A549 (cell line): ENCODE measurements at regions of chr1 and their contacts with region 1.

Region 1: DNA sequence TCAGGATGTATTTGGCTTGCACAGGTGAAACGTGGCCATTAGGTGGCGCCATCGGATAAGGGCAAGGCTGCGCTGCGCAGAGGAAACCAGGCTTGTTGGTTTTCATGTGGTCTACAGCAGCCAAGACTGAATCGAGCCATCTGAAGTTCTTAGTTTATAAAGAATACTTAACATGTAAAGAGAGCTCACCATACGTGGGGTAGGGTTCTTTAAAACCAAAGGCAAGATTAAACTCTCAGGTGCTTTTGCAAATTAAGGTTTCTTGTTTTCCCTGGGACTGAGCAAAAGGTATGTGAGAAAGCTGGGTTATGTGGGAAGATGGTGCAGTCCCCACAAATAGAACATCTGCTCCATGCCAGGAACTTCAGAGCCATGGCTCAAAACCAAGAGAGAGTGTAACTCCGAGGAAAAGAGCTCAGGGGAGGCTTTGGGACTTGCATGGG is 9.3 kb downstream of the MASP2 start:
- DNase-seq: peak; percentile 74 to 78
- ATAC-seq: peak; percentile 90 to 95
- H3K4me3 ChIP-seq: no peak overlapping the region
- H3K27ac ChIP-seq: no peak overlapping the region
- H3K4me1 ChIP-seq: no peaks in the 10 kb centered on the region
- CTCF ChIP-seq: peak; percentile 86
- EP300 ChIP-seq: no peak
- POLR2A ChIP-seq: no peak
- RAD21 ChIP-seq: peak; percentile 90 to 96

Region 2: DNA sequence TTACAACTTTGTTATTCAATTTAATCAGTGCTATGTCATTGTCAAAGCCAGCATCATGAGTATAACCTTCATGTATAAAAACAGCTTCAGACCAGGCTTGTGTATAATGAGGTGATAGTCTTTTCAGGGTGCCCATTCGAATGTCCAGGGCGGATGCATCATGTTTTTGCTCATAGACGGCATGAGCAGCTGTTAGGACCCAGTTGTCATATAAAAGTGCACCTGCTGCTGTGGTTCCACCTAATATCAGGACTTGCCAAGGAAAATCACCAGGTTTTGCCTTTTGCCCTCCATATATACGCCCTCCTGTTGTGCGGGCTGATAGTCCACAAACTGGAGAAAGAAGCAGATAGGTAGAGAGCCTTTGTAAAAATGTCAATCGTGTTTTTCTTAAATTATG is 10.4 kb before region 1 on chr1:
- CTCF ChIA-PET with region 1: interaction called, 12 read pairs
- POLR2A ChIA-PET with region 1: no interaction called
- DNase-seq: no peak
- ATAC-seq: no peak; a peak in 1 of 6 replicates
- H3K4me3 ChIP-seq: no peak overlapping the region
- H3K27ac ChIP-seq: no peak overlapping the region
- H3K4me1 ChIP-seq: no peaks in the 10 kb centered on the region
- CTCF ChIP-seq: no peak
- EP300 ChIP-seq: no peak
- POLR2A ChIP-seq: no peak
- RAD21 ChIP-seq: no peak

Region 3: DNA sequence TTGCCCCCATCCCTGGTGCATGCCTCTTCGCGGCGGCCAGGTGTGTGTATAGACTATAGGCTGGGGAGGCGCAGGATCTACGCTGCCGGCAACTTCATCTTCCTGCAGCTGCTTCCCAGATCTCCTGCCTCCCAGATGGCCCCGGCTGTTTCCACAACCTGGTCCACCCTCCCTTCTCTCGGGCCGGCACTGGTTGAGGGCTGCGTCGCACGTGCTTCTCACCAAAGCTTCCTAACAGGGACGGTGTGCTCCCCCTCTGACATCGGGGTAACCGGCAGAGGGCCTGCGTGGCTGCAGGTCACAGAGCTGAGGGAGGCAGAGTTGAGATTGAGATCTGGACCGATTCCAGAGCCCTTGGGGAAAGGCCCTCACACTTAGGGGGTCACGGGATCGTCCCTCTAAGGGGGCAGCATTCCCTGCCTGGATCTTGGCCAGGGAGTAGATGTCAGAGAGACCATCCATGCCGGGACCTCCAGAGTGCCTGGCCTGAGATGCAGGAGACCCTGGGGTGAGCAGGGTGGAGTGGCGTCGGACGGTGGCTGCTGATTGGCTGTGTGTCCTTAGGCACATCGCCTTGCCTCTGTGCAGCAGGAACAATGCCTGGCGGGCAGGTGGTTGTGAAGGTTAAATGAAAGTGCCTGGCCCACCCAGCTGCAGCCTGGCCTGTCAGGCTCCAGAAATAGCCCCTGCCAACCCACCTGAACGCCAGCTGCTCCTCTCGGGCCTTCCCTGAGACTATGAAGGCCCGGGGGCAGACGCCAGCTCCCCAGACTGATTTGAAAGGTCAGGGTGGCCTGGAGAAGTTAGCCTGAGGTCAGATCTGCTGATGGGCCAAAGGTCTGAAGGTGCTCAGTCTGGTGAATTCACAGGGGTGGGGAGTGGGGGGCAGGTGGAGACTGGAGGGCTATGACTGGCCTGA is 15.3 kb after region 1 on chr1:
- CTCF ChIA-PET with region 1: interaction called, 59 read pairs
- POLR2A ChIA-PET with region 1: no interaction called
- DNase-seq: no peak
- ATAC-seq: peak; percentile 31 to 32
- H3K4me3 ChIP-seq: no peak overlapping the region
- H3K27ac ChIP-seq: no peak overlapping the region
- H3K4me1 ChIP-seq: no peaks in the 10 kb centered on the region; the same call in 2 of the 3 replicates
- CTCF ChIP-seq: no peak
- EP300 ChIP-seq: no peak
- POLR2A ChIP-seq: no peak
- RAD21 ChIP-seq: no peak

Region 4: GRCh38 chr1:11059990-11060830 is 22.4 kb after region 1 on chr1 and contains the start of gene SRM:
- CTCF ChIA-PET with region 1: interaction called, 33 read pairs
- POLR2A ChIA-PET with region 1: interaction called, 3 read pairs
- DNase-seq: peak; percentile 83 to 89
- ATAC-seq: peak; percentile 95 to 97
- H3K4me3 ChIP-seq: peak within 1 kb of the TSS; percentile 97
- H3K27ac ChIP-seq: peak within 1 kb of the TSS; percentile 95 to 100
- H3K4me1 ChIP-seq: peaks cover 9% of the 10 kb centered on the region; the same call in 2 of the 3 replicates
- CTCF ChIP-seq: no peak
- EP300 ChIP-seq: no peak
- POLR2A ChIP-seq: peak; percentile 82
- RAD21 ChIP-seq: no peak
- polyA plus RNA-seq, gene SRM: 30.8 and 43.6 TPM in 2 replicates

Region 5: DNA sequence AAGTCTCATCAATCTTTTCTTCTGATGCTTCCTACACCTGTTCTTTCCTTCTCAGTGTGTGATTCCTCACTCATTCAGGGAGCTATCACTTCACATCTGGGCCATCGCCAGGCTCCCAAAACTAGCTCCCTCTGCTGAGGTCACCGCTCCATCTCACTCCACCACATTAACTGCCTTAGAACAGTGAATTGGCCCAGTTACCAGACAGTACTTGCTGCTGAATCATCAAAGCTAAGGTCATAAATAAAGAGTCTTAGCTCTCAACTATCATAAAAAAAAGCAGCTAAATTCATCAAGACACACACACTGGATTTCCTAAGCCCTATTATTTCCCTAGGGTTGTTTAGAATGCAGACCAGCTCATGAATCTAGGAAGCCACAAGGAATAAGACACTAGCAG is 40.9 kb after region 1 on chr1:
- CTCF ChIA-PET with region 1: interaction called, 11 read pairs
- POLR2A ChIA-PET with region 1: no interaction called
- DNase-seq: no peak
- ATAC-seq: no peak
- H3K4me3 ChIP-seq: no peak overlapping the region
- H3K27ac ChIP-seq: no peak overlapping the region
- H3K4me1 ChIP-seq: no peaks in the 10 kb centered on the region
- CTCF ChIP-seq: no peak
- EP300 ChIP-seq: no peak
- POLR2A ChIP-seq: no peak
- RAD21 ChIP-seq: no peak

Region 6: GRCh38 chr1:11099310-11100149 is 61.8 kb after region 1 on chr1 and contains the start of gene EXOSC10:
- CTCF ChIA-PET with region 1: interaction called, 16 read pairs
- POLR2A ChIA-PET with region 1: interaction called, 3 read pairs
- DNase-seq: peak; percentile 84 to 88
- ATAC-seq: peak; percentile 97
- H3K4me3 ChIP-seq: peak within 1 kb of the TSS; percentile 88
- H3K27ac ChIP-seq: peak within 1 kb of the TSS; percentile 93 to 100
- H3K4me1 ChIP-seq: peaks cover 8% of the 10 kb centered on the region; the same call in 2 of the 3 replicates
- CTCF ChIP-seq: no peak
- EP300 ChIP-seq: no peak
- POLR2A ChIP-seq: peak; percentile 40
- RAD21 ChIP-seq: no peak
- polyA plus RNA-seq, gene EXOSC10: 74.0 and 76.9 TPM in 2 replicates

Region 7: GRCh38 chr1:11634365-11635192 is 596.8 kb after region 1 on chr1:
- CTCF ChIA-PET with region 1: interaction called, 22 read pairs
- POLR2A ChIA-PET with region 1: no interaction called
- DNase-seq: no peak
- ATAC-seq: no peak
- H3K4me3 ChIP-seq: no peak overlapping the region
- H3K27ac ChIP-seq: no peak overlapping the region
- H3K4me1 ChIP-seq: no peaks in the 10 kb centered on the region
- CTCF ChIP-seq: no peak
- EP300 ChIP-seq: no peak
- POLR2A ChIP-seq: no peak
- RAD21 ChIP-seq: no peak